GM12878 (cell line): ENCODE measurements at regions of chr12 and their contacts with region 1.

Region 1: GRCh38 chr12:6752921-6753771 is at the start of gene MLF2:
- DNase-seq: peak; percentile 94
- ATAC-seq: peak; percentile 95
- H3K4me3 ChIP-seq: peak within 1 kb of the TSS; percentile 80
- H3K27ac ChIP-seq: peak within 1 kb of the TSS; percentile 99
- H3K4me1 ChIP-seq: peaks cover 11% of the 10 kb centered on the region
- H3K27me3 ChIP-seq: no peaks in the 10 kb centered on the region
- CTCF ChIP-seq: peak; percentile 95 to 99 (median 97); a peak in 3 of 6 replicates
- EP300 ChIP-seq: peak in 1 of 2 experiments; percentile 40; a peak in 1 of 4 replicates
- POLR2A ChIP-seq: peak; percentile 93
- RAD21 ChIP-seq: no peak
- polyA plus RNA-seq, gene MLF2: 13.5 to 21.5 TPM

Region 2: DNA sequence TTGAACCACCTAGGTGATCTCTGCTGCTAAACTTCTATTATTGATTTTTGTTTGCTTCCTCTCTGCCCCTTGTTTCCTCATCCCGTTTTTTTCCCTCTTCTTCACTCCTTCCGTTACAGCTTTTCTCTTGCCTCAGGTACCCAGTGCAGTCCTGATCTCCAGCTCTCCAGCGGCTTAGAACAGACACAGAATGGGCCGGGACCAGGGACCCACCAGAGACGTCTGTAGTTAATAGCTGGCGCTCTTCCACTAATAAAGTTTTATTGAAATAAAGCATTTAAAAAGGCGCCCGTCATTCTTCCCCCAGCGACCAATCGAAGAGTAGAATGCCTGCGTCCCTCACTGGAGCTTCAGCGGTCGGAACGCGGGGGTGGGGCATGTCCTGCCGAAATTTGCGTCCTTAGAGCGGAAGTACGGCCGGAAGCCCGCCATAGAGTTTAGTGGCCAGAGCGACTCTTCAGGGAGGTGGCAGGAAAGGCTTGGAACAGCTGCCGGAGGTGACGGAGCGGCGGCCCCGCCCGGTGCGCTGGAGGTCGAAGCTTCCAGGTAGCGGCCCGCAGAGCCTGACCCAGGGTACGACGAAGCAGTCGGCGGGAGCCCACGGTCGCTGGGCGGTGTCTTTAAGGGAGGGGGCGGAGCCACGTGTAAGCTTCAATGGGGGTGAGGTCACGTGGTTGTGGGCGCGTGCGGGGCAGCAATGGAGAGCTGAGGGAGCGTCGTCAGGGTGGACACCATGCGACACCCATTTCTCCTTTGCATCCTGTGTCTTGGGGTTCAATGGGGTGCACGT is 29.3 kb before region 1 on chr12 and contains the start of gene COPS7A:
- CTCF ChIA-PET with region 1: interaction called, 28 read pairs
- POLR2A ChIA-PET with region 1: interaction called, 30 read pairs
- RAD21 ChIA-PET with region 1: interaction called, 27 read pairs
- SMC1A ChIA-PET with region 1: interaction called, 21 read pairs
- in situ Hi-C with region 1: no loop called
- intact Hi-C with region 1: no loop called
- DNase-seq: peak; percentile 97
- ATAC-seq: peak; percentile 98
- H3K4me3 ChIP-seq: peak within 1 kb of the TSS; percentile 91
- H3K27ac ChIP-seq: peak within 1 kb of the TSS; percentile 80
- H3K4me1 ChIP-seq: no peaks in the 10 kb centered on the region; the same call in 1 of the 2 replicates
- H3K27me3 ChIP-seq: no peaks in the 10 kb centered on the region
- CTCF ChIP-seq: peak in 1 of 3 experiments; percentile 10; a peak in 1 of 6 replicates
- EP300 ChIP-seq: 0 out of 4 replicates have a peak, but pooled peaks of 1 of the 2 experiments have one; percentile 11
- POLR2A ChIP-seq: peak; percentile 93
- RAD21 ChIP-seq: no peak
- polyA plus RNA-seq, gene COPS7A: 25.7 to 26.1 TPM

Region 3: GRCh38 chr12:6771091-6771495 is 17.9 kb after region 1 on chr12:
- CTCF ChIA-PET with region 1: interaction called, 221 read pairs
- POLR2A ChIA-PET with region 1: interaction called, 60 read pairs
- RAD21 ChIA-PET with region 1: interaction called, 68 read pairs
- SMC1A ChIA-PET with region 1: interaction called, 84 read pairs
- in situ Hi-C with region 1: no loop called
- intact Hi-C with region 1: no loop called
- DNase-seq: no peak
- ATAC-seq: no peak
- H3K4me3 ChIP-seq: no peak overlapping the region
- H3K27ac ChIP-seq: no peak overlapping the region
- H3K4me1 ChIP-seq: peaks cover 46% of the 10 kb centered on the region
- H3K27me3 ChIP-seq: no peaks in the 10 kb centered on the region
- CTCF ChIP-seq: no peak
- EP300 ChIP-seq: no peak
- POLR2A ChIP-seq: no peak
- RAD21 ChIP-seq: no peak

Region 4: DNA sequence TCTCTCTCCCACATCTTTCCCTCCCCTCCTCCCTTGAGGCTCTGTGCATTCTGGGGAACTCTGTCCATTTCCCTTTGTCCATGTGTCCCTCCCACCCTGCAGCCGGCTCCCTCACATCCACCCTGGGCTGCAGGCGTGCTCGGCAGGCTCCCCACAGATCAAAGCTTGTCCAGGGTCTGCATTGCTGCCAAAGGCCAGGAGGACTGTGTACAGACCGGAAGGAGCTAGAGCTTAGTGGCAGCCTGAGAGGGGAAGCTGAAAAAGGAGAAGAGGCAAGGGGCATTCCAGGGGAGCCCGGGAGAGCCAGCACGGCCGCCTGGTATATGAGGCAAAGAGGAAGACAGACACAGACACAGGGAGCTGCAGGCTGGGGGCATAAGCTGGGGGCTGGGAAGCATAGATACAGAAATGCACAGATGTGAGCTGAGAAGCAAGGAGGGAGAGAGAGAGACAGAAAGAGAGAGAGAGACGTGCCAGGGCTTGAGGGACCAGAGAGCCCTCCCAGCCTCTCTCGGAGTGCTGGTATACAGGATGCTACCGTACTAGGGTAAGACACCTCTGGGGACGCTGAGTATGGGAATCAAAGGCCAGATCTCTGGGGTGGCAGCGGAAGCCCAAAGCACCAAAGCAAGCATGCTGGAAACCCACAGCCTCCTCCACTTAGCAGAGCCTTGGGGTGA is 39.5 kb after region 1 on chr12:
- CTCF ChIA-PET with region 1: interaction called, 19 read pairs
- POLR2A ChIA-PET with region 1: interaction called, 5 read pairs
- RAD21 ChIA-PET with region 1: interaction called, 6 read pairs
- SMC1A ChIA-PET with region 1: interaction called, 10 read pairs
- in situ Hi-C with region 1: no loop called
- intact Hi-C with region 1: no loop called
- DNase-seq: no peak
- ATAC-seq: peak; percentile 93
- H3K4me3 ChIP-seq: no peak overlapping the region
- H3K27ac ChIP-seq: no peak overlapping the region
- H3K4me1 ChIP-seq: peaks cover 15% of the 10 kb centered on the region
- H3K27me3 ChIP-seq: no peaks in the 10 kb centered on the region; a peak in 1 of 4 replicates
- CTCF ChIP-seq: no peak
- EP300 ChIP-seq: no peak
- POLR2A ChIP-seq: no peak
- RAD21 ChIP-seq: no peak

Region 5: GRCh38 chr12:6833189-6833890 is 80.2 kb after region 1 on chr12:
- CTCF ChIA-PET with region 1: interaction called, 43 read pairs
- POLR2A ChIA-PET with region 1: interaction called, 8 read pairs
- RAD21 ChIA-PET with region 1: interaction called, 14 read pairs
- SMC1A ChIA-PET with region 1: interaction called, 35 read pairs
- in situ Hi-C with region 1: loop called (anchors 5 kb)
- intact Hi-C with region 1: no loop called
- DNase-seq: no peak
- ATAC-seq: no peak
- H3K4me3 ChIP-seq: no peak overlapping the region
- H3K27ac ChIP-seq: no peak overlapping the region
- H3K4me1 ChIP-seq: peaks cover 4% of the 10 kb centered on the region
- H3K27me3 ChIP-seq: peaks cover 11 to 17% of the 10 kb centered on the region in 2 experiments
- CTCF ChIP-seq: no peak
- EP300 ChIP-seq: no peak
- POLR2A ChIP-seq: no peak
- RAD21 ChIP-seq: no peak

Region 6: GRCh38 chr12:6867413-6868210 is 114.5 kb after region 1 on chr12 and contains the start of gene TPI1:
- CTCF ChIA-PET with region 1: interaction called, 7 read pairs
- POLR2A ChIA-PET with region 1: interaction called, 8 read pairs
- RAD21 ChIA-PET with region 1: interaction called, 12 read pairs
- SMC1A ChIA-PET with region 1: interaction called, 13 read pairs
- in situ Hi-C with region 1: no loop called
- intact Hi-C with region 1: no loop called
- DNase-seq: peak; percentile 23
- ATAC-seq: peak; percentile 86
- H3K4me3 ChIP-seq: peak within 1 kb of the TSS; percentile 100
- H3K27ac ChIP-seq: peak within 1 kb of the TSS; percentile 96
- H3K4me1 ChIP-seq: peaks cover 32% of the 10 kb centered on the region
- H3K27me3 ChIP-seq: no peaks in the 10 kb centered on the region
- CTCF ChIP-seq: no peak
- EP300 ChIP-seq: no peak
- POLR2A ChIP-seq: peak; percentile 88
- RAD21 ChIP-seq: no peak
- polyA plus RNA-seq, gene TPI1: 5,044 to 7,349 TPM